A549 (cell line): ENCODE measurements at regions of chrX and their contacts with region 1.

Region 1: DNA sequence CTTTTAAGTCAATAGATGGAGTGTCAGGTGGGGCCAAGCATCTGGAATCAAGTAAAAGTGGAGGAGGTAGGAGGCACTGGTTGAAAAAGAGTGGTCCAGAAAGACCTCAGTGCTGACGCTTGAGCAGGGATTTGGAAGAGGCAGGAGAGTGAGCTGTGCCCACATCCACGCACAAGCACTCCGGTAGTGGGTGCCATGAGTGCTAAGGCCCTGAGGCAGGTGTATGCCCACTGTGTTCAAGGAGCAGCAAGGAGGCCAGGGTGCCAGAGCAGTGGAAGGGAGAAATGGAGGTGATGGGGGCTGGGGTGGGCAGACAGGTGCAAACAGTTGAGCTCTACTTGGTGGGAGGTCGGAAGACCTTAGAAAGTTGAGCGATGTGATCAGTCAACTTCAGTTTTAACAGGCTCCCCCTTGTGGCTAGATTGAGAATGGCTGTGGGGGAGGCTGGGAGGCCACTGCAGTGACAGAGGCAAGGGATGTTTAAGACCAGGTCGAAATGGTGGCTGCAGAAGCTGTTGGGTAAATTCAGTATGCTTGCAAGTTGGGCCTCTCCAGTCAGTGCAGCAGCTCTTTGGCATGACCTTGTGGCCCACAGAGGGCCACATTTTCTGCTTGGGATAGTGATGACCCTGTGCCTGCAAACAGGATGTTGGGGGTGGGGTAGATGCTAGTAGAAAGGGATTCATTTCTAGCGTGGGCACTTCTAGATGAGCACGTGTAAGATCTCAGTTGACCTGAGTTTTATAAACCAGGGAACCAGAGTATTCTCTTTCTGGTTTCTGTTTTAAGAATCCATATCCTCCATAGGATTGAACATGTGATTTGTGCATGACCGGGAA is 12.7 kb downstream of the TKTL1 start:
- DNase-seq: peak; percentile 39 to 53
- ATAC-seq: peak; percentile 77 to 91; a peak in 5 of 6 replicates
- H3K4me3 ChIP-seq: no peak overlapping the region
- H3K27ac ChIP-seq: no peak overlapping the region
- H3K4me1 ChIP-seq: no peaks in the 10 kb centered on the region
- CTCF ChIP-seq: peak; percentile 60
- EP300 ChIP-seq: no peak
- POLR2A ChIP-seq: no peak
- RAD21 ChIP-seq: peak; percentile 26 to 32; a peak in 2 of 5 replicates

Region 2: DNA sequence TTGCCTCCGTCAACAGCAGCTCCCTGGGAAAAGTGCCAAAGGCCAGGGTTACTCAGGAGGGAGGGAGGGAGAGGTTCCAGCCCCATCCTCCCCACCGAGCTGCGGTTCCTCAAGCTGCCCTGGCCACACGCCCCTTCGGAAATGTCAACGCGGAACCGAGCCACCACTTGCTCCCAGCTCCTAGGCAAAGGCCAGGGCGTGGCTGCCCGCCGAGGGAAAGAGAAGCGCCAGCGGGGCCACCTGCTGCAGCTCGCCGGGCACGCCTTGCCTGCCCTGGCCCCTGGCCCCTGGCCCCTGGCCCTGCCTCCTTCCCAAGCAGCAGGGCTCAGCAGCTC is 605.3 kb before region 1 on chrX:
- CTCF ChIA-PET with region 1: no interaction called
- POLR2A ChIA-PET with region 1: no interaction called
- DNase-seq: no peak
- ATAC-seq: no peak
- H3K4me3 ChIP-seq: no peak overlapping the region
- H3K27ac ChIP-seq: no peak overlapping the region
- H3K4me1 ChIP-seq: no peaks in the 10 kb centered on the region
- CTCF ChIP-seq: no peak
- EP300 ChIP-seq: no peak
- POLR2A ChIP-seq: no peak
- RAD21 ChIP-seq: no peak

Region 3: DNA sequence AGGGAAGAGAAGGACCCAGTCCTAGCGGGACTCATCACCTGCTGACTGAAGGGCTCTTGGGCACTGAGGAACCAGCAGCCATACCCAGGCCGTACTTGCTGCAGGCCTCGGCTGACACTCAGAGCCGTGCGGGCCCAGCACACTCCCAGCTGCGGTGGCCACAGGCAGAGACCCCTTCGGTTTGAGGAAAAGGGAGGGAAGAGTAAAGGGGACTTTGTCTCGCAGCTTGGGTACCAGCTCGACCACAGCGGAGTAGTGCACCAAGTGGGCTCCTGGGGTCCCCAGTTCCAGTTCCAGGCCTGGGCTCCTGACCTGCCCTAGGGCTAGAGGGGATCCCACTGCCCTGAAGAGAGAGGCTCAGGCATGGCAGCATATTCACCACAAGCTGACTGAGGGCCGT is 182.2 kb before region 1 on chrX:
- CTCF ChIA-PET with region 1: interaction called, 10 read pairs
- POLR2A ChIA-PET with region 1: no interaction called
- DNase-seq: no peak
- ATAC-seq: no peak
- H3K4me3 ChIP-seq: no peak overlapping the region
- H3K27ac ChIP-seq: no peak overlapping the region
- H3K4me1 ChIP-seq: no peaks in the 10 kb centered on the region
- CTCF ChIP-seq: no peak
- EP300 ChIP-seq: no peak
- POLR2A ChIP-seq: no peak
- RAD21 ChIP-seq: no peak

Region 4: DNA sequence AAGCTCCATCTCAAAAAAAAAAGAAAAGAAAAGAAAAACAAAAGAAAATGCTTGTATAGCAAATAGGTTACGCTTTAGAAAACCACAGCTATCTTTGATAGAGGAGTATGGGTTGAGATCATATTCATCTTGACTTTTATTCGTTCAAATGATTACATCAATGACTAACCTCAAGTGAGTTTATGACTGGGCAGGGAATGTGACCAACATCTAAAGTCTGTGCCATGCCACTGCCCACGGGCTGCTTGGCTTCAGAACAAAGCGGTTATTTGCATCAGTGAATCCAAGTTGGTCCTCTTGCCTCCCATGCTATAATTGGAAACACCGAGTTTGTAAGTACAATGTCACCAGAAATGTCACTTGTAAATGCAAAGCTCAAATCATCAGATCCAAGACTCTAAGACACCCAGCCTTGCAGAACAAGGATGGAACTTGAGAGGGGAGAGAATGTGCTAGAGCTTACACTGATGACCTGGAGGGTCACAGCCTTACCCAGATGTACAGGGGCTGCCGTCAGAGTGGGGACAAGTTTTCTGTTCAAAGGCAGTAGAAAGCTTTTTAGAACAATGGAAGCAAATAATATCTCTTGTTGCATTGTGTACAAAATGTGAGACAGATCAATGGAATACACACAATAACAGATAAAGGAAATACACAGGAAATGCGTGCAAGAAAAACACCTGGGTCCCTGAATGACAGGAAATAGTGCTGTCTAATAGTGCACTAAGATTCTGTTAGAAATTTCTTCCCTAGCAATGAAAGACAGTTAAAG is 172.7 kb before region 1 on chrX:
- CTCF ChIA-PET with region 1: interaction called, 11 read pairs
- POLR2A ChIA-PET with region 1: no interaction called
- DNase-seq: no peak
- ATAC-seq: no peak
- H3K4me3 ChIP-seq: no peak overlapping the region
- H3K27ac ChIP-seq: no peak overlapping the region
- H3K4me1 ChIP-seq: no peaks in the 10 kb centered on the region
- CTCF ChIP-seq: no peak
- EP300 ChIP-seq: no peak
- POLR2A ChIP-seq: no peak
- RAD21 ChIP-seq: no peak

Region 5: DNA sequence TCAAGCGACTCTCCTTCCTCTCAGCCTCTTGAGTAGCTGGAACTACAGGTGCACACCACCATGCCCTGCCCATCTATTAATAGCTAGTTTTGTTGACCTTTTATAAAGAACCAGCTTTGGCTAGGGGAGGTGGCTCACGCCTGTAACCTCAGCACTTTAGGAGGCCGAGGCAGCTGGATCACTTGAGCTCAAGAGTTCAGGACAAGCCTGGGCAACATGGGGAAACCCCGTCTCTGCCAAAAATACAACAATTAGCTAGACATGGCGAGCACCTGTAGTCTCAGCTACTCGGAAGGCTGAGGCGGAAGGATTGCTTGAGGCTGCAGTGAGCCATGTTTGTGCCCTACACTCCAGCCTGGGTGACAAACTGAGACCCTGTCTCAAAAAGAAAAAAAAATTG is 10.0 kb before region 1 on chrX:
- CTCF ChIA-PET with region 1: interaction called, 31 read pairs
- POLR2A ChIA-PET with region 1: no interaction called
- DNase-seq: no peak
- ATAC-seq: no peak
- H3K4me3 ChIP-seq: no peak overlapping the region
- H3K27ac ChIP-seq: no peak overlapping the region
- H3K4me1 ChIP-seq: no peaks in the 10 kb centered on the region
- CTCF ChIP-seq: no peak
- EP300 ChIP-seq: no peak
- POLR2A ChIP-seq: no peak
- RAD21 ChIP-seq: no peak